ENCODE measurements at regions of chr5 and their contacts with region 1.

Region 1: DNA sequence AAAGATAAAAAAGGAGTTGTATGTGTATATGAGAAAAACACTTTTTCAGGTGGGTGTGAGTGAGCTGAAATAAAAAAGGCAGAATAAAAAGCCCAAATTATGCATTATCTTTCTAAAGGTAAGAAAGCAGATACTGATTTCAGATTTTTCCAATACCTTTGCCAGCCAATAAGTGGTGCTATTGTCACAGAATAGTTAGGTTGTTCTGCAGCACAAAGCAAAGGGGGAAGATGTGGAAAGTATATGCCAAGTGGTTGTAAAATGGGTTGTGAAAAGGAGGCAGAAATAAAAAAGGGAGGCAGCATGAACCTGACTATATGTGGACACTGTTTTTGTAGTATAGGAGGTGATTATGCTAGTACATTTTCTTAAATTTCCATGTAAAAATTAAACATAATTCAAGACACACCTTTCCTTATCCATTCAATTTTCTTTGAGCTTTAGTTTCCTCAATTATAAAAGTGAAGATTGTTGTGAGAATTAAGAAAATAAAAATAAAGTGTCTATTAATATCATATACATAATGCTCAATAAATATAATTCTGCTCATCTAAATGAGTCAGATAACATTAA is 106.7 kb downstream of the SMIM15 start:
- DNase-seq: peak in 1 of 2 experiments; percentile 43
- H3K4me3 ChIP-seq: no peak overlapping the region
- H3K4me3 Mint-ChIP-seq: no peak overlapping the region
- H3K27ac Mint-ChIP-seq: no peak overlapping the region
- H3K4me1 ChIP-seq: peaks cover 26% of the 10 kb centered on the region
- H3K4me1 Mint-ChIP-seq: peaks cover 19% of the 10 kb centered on the region
- H3K27me3 ChIP-seq: no peaks in the 10 kb centered on the region
- H3K27me3 Mint-ChIP-seq: no peaks in the 10 kb centered on the region
- CTCF ChIP-seq: peak; percentile 73 to 78

Region 2: DNA sequence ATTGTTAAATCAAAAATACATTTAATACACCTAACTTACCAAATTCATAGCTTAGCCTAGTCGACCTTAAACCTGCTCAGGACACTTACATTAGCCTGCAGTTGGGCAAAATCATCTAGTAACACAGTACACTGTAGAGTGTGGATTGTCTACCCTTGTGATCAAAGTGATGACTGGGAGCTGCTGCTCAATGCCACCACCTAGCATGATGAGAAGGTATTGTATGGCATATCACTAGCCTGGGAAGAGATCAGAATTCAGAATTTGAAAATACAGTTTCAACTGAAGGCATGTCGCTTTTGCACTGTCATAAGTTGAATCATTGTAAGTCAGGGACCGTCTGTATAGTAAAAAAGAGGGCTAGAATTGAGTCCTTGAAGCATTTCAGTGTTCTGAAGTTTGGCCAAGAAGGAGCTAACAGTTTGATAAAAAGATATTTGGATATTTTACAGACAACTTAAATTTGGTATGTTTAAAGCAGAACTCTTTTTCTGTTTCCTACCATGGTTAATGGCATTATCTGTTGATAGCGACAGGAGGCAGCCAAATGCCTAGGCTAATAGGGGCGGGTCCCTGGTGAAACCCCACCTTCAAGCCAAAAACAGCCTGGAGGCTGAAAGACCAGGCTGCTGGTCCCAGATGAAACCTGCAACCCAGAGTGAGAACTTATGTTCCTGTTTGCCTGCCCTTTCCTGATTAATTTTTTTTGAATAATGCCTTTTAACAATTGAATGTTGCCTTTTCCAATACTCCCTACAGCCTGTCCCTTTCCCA is 83.8 kb after region 1 on chr5:
- CTCF ChIA-PET with region 1: no interaction called
- POLR2A ChIA-PET with region 1: no interaction called
- intact Hi-C with region 1: loop called (anchors 1 kb)
- DNase-seq: peak in 1 of 2 experiments; percentile 20
- H3K4me3 ChIP-seq: no peak overlapping the region
- H3K4me3 Mint-ChIP-seq: no peak overlapping the region
- H3K27ac Mint-ChIP-seq: no peak overlapping the region
- H3K4me1 ChIP-seq: no peaks in the 10 kb centered on the region
- H3K4me1 Mint-ChIP-seq: no peaks in the 10 kb centered on the region
- H3K27me3 ChIP-seq: no peaks in the 10 kb centered on the region
- H3K27me3 Mint-ChIP-seq: no peaks in the 10 kb centered on the region
- CTCF ChIP-seq: peak; percentile 42 to 50

Region 3: DNA sequence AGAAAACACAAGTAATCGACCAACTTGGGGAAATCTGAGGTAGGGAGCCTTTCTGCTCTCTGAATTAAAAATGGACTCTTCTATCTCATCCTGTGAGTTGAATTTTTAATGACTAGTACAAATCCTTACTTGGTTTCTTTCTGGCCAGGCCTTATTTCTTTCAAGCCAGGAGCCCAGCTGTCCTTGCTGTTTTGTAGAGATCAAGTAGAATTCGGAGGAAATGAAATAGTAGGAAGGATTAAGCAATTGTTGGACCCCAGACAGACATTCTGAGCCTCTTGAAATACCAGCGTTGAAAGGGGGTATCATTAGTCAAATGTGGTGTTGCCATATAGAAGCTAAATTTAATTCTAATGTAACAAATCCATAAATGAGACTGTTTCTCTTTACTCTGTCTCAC is 160.5 kb after region 1 on chr5:
- CTCF ChIA-PET with region 1: no interaction called
- POLR2A ChIA-PET with region 1: no interaction called
- intact Hi-C with region 1: loop called (anchors 1 kb)
- DNase-seq: no peak
- H3K4me3 ChIP-seq: no peak overlapping the region
- H3K4me3 Mint-ChIP-seq: no peak overlapping the region
- H3K27ac Mint-ChIP-seq: no peak overlapping the region
- H3K4me1 ChIP-seq: no peaks in the 10 kb centered on the region
- H3K4me1 Mint-ChIP-seq: no peaks in the 10 kb centered on the region
- H3K27me3 ChIP-seq: no peaks in the 10 kb centered on the region
- H3K27me3 Mint-ChIP-seq: peaks cover 2% of the 10 kb centered on the region
- CTCF ChIP-seq: no peak

Region 4: DNA sequence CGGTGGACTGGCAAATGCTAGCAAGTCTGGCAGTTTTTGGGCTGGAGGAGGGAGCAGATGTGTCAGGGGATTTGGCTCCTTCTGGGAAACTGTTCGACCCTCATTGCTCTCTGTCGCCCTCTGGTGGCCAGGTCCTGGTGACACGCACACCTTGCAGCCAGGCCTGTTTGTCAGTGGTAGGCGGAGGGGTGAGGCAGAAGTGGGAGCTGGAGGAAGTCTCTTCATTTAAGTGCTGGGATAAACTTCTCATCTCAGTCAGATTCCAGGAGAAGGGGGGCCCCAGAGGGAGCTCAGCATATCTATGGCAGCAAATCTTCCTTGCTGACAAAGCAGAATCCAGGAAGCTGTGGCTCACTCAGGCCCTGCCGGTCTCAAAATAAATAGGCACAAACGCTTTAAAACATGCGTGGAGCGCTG is 603.1 kb after region 1 on chr5:
- CTCF ChIA-PET with region 1: no interaction called
- POLR2A ChIA-PET with region 1: no interaction called
- intact Hi-C with region 1: loop called (anchors 1 kb)
- DNase-seq: peak; percentile 78 to 87
- H3K4me3 ChIP-seq: no peak overlapping the region
- H3K4me3 Mint-ChIP-seq: no peak overlapping the region
- H3K27ac Mint-ChIP-seq: no peak overlapping the region
- H3K4me1 ChIP-seq: no peaks in the 10 kb centered on the region
- H3K4me1 Mint-ChIP-seq: no peaks in the 10 kb centered on the region
- H3K27me3 ChIP-seq: no peaks in the 10 kb centered on the region
- H3K27me3 Mint-ChIP-seq: peaks cover 16% of the 10 kb centered on the region
- CTCF ChIP-seq: peak; percentile 96

Region 5: DNA sequence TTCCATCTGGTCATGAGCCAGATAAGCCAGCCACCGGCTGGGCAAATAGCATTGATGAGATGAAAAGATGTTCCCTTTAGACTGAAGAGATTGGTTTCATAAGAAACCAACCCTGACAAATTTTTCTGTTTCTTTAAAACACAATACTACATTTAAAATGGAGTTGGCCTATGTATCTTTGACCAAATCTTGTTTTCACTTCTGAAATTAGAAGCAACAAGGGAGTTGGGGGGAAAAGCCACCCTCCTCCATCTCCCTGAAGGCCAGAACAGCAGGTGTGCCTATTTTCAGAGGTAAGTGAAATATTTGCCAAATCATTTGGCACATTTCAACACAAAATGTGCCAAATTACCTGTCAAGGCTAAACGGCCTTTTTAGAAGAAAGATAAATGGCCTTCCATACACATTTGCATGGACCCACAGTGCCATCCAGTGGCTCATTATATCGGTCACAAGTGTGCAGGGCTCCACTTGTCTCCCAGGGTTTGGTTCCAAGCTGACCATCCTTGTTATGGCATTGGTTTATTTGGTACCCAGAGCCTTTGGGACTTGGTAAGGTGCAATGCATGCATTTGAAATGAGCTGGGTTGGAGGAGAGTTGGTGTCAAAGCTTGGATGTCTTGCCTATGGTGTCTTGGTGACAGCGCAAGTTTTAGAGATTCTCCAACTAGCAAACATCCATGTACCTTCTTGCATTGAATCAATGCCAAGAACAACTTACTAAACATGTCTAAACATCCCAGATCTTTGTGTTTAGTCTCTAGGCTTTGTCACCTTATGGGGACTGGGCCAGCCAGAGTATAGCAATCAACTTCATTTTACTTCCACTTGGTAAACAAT is 878.5 kb after region 1 on chr5:
- CTCF ChIA-PET with region 1: no interaction called
- POLR2A ChIA-PET with region 1: no interaction called
- intact Hi-C with region 1: loop called (anchors 10 kb)
- DNase-seq: peak; percentile 46 to 55
- H3K4me3 ChIP-seq: no peak overlapping the region
- H3K4me3 Mint-ChIP-seq: no peak overlapping the region
- H3K27ac Mint-ChIP-seq: no peak overlapping the region
- H3K4me1 ChIP-seq: no peaks in the 10 kb centered on the region
- H3K4me1 Mint-ChIP-seq: no peaks in the 10 kb centered on the region
- H3K27me3 ChIP-seq: no peaks in the 10 kb centered on the region
- H3K27me3 Mint-ChIP-seq: peaks cover 5% of the 10 kb centered on the region
- CTCF ChIP-seq: peak; percentile 48 to 55

Measured in Caco-2 (cell line).